Panc1 (cell line): ENCODE measurements at regions of chr1 and their contacts with region 1.

Region 1: GRCh38 chr1:64966158-64966971 is at the start of gene JAK1:
- DNase-seq: no peak
- ATAC-seq: peak; percentile 95
- H3K4me3 ChIP-seq: peak within 1 kb of the TSS; percentile 88 to 94
- H3K27ac ChIP-seq: peak within 1 kb of the TSS; percentile 86
- H3K4me1 ChIP-seq: peaks cover 36% of the 10 kb centered on the region
- H3K27me3 ChIP-seq: no peaks in the 10 kb centered on the region
- CTCF ChIP-seq: no peak
- total RNA-seq, gene JAK1: 138 TPM

Region 2: GRCh38 chr1:64744492-64745180 is 221.7 kb before region 1 on chr1 and contains the start of gene RAVER2:
- CTCF ChIA-PET with region 1: no interaction called
- POLR2A ChIA-PET with region 1: interaction called, 14 read pairs
- in situ Hi-C with region 1: no loop called
- intact Hi-C with region 1: no loop called
- DNase-seq: no peak
- ATAC-seq: peak; percentile 88
- H3K4me3 ChIP-seq: peak within 1 kb of the TSS; percentile 65 to 82
- H3K27ac ChIP-seq: peak within 1 kb of the TSS; percentile 80
- H3K4me1 ChIP-seq: peaks cover 23% of the 10 kb centered on the region
- H3K27me3 ChIP-seq: no peaks in the 10 kb centered on the region; the same call in 1 of the 2 replicates
- CTCF ChIP-seq: peak; percentile 91
- total RNA-seq, gene RAVER2: 15.1 TPM

Region 3: DNA sequence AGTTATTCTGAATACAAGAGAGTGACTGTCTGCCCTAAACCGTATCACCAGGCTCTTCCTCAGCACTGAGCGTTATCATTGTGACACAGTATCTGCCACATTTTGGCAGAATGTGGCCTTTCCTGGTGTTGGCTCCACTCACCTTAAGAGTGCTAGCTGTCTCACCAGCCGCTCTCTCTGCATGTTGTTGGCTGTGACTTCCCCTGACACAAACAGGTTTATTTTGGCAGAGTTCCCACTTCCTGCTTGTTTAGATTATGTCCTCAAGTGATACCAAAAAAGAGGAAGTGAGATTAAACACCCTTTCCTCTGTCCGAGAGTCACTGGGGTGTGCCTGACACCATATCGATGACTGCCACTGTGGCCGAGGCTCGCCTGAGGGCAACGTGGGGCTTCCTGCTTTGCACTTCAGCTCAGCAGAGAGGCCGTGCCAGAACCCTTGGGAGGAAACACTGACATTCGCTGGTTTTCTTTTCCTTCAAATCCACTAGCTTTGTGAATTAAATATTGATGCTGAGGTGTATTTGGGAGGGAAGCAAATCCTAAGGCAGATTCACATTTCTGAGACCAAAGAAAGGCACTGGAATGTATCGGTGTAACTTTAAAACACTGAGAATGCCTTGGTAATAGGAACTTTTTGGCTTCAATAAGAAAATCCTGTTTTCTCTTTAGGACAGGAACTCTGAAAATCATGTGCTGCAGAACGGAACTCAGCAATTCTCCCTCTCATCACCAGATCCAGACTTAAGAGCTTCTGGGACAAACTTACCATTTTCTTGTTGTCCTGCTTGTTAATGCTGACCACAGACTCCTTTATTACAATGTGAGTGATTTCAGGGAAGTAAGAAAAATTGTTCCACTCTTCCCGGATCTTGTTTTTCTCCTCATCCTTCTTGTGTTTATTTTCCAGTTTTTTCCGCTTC is 102.1 kb before region 1 on chr1:
- CTCF ChIA-PET with region 1: no interaction called
- POLR2A ChIA-PET with region 1: interaction called, 12 read pairs
- in situ Hi-C with region 1: no loop called
- intact Hi-C with region 1: no loop called
- DNase-seq: no peak
- ATAC-seq: no peak
- H3K4me3 ChIP-seq: no peak overlapping the region
- H3K27ac ChIP-seq: no peak overlapping the region
- H3K4me1 ChIP-seq: peaks cover 3% of the 10 kb centered on the region; the same call in 1 of the 2 replicates
- H3K27me3 ChIP-seq: no peaks in the 10 kb centered on the region
- CTCF ChIP-seq: no peak

Region 4: GRCh38 chr1:64898107-64898845 is 68.1 kb before region 1 on chr1:
- CTCF ChIA-PET with region 1: no interaction called
- POLR2A ChIA-PET with region 1: interaction called, 3 read pairs
- in situ Hi-C with region 1: no loop called
- intact Hi-C with region 1: loop called (anchors 5 kb)
- DNase-seq: peak; percentile 92
- ATAC-seq: peak; percentile 98
- H3K4me3 ChIP-seq: peak overlapping the region; percentile 8 to 31; a peak in 3 of 4 replicates
- H3K27ac ChIP-seq: peak overlapping the region; percentile 95
- H3K4me1 ChIP-seq: peaks cover 79% of the 10 kb centered on the region
- H3K27me3 ChIP-seq: no peaks in the 10 kb centered on the region
- CTCF ChIP-seq: no peak

Region 5: DNA sequence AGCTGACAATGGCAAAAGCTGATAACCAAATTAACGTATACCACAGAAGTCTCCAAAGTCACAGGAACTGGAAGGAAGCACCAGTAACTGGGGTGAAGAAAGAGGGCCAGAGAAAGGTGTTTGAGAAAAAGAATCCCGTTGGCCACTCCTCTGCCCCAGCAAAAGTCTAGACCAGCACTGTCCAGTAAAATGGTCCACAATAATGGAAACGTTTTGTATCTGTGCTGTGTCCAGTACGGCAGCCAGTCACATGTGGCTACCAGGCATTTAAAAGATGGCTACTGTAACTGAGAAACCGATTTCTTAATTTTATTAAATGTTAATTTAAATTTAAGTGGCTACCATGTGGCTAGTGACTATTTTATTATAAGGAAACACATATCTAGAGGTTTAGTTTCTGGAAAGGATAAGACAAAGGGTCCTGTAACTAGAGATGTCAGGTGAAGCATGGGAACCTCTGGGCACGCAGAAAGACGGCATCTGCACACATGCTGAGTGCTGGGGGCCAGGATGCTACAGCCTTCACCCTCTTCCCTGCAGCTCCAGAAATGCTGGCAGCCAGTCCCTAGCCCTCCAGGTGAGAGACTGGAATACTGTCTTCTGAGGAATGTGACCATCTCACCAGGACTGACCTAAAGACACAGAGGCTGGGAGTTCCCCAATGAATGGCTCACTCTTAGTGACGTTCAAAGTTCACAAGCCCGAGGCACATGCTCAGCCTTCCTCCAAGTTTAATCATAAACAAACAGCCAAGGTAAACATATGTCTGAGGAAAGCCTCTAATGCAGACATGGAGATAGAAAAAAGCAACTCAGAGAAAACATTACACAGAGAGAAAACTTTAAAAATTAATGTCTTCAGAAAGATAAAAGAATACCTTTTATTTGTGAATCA is 50.7 kb before region 1 on chr1:
- CTCF ChIA-PET with region 1: no interaction called
- POLR2A ChIA-PET with region 1: no interaction called
- in situ Hi-C with region 1: no loop called
- intact Hi-C with region 1: no loop called
- DNase-seq: no peak
- ATAC-seq: peak; percentile 92
- H3K4me3 ChIP-seq: peak overlapping the region; percentile 2 to 40; a peak in 3 of 4 replicates
- H3K27ac ChIP-seq: peak overlapping the region; percentile 84
- H3K4me1 ChIP-seq: peaks cover 58% of the 10 kb centered on the region
- H3K27me3 ChIP-seq: no peaks in the 10 kb centered on the region
- CTCF ChIP-seq: no peak